AG04449 (cell line): ENCODE measurements at regions of chr5 and their contacts with region 1.

Region 1: DNA sequence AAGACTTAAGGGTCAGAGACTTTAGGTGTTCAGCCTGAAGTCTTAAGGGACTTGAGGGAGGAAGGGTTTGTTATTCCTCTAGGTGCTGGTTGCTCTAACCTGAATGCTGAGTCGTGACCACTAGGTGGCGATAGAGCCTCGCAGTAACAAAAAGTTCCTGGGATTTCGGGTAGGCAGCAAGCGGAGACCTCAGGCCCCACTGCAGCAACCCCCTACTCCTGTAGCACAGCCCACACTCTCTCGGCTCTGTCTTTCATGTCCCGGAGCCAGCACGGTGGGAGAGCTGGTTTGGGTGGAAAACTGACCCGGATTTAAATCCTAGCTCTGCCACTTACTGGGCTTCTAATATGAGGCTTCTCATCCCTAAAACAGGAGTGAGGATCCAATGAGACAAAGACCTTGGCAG is 100.3 kb upstream of the PANK3 start:
- DNase-seq: peak; percentile 14
- H3K4me3 ChIP-seq: no peak overlapping the region
- CTCF ChIP-seq: peak; percentile 79

Region 2: GRCh38 chr5:168654211-168654721 is 25.3 kb before region 1 on chr5:
- CTCF ChIA-PET with region 1: interaction called, 11 read pairs
- POLR2A ChIA-PET with region 1: no interaction called
- DNase-seq: peak; percentile 37
- H3K4me3 ChIP-seq: no peak overlapping the region
- CTCF ChIP-seq: no peak

Region 3: GRCh38 chr5:168696611-168697010 is 17.1 kb after region 1 on chr5:
- CTCF ChIA-PET with region 1: interaction called, 50 read pairs
- POLR2A ChIA-PET with region 1: no interaction called
- DNase-seq: no peak
- H3K4me3 ChIP-seq: no peak overlapping the region
- CTCF ChIP-seq: no peak

Region 4: GRCh38 chr5:168706655-168707069 is 27.1 kb after region 1 on chr5:
- CTCF ChIA-PET with region 1: interaction called, 10 read pairs
- POLR2A ChIA-PET with region 1: no interaction called
- DNase-seq: no peak
- H3K4me3 ChIP-seq: no peak overlapping the region
- CTCF ChIP-seq: peak; percentile 79